AG04450 (cell line): ENCODE measurements at regions of chr10 and their contacts with region 1.

Region 1: GRCh38 chr10:92506336-92506735 is 67.6 kb downstream of the IDE start:
- DNase-seq: no peak
- H3K4me3 ChIP-seq: no peak overlapping the region
- H3K27ac ChIP-seq: no peak overlapping the region
- H3K27me3 ChIP-seq: no peaks in the 10 kb centered on the region
- CTCF ChIP-seq: no peak

Region 2: DNA sequence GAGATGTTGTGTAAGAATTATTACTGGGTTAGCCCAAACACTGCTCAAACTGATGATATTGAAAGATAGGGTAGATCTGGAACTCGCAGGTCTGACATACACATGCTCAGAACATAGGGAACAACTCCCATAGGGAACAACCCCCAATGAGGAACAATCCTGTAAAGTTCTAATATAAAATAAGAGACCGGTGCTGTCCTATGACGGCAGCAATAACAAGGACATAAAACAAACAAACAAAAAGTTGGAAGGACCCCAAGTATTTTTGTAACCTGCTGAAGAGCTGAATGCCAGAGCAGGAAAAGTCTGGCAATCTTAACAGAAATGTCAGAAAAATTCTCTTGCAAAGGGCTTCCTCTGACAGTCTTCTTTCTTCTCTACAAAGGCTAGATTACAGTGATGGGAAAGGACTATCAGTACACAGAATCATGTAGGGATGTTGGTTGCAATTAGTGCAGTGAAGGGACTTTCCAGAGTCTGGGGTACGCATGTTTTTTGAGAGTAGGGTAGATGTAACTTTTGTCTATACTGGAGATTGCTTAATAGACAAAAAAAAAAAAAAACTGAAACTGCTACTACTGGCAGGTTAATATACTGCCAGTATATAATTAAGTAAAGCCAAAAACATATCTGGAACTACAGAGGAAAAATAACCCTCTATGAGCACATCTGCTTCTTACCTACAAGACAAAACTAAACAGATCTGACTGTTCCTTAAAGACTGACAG is 32.1 kb after region 1 on chr10:
- CTCF ChIA-PET with region 1: interaction called, 11 read pairs
- POLR2A ChIA-PET with region 1: no interaction called
- DNase-seq: no peak
- H3K4me3 ChIP-seq: no peak overlapping the region
- H3K27ac ChIP-seq: no peak overlapping the region
- H3K27me3 ChIP-seq: no peaks in the 10 kb centered on the region
- CTCF ChIP-seq: no peak